B cell (primary cell): ENCODE measurements at regions of chr12 and their contacts with region 1.

Region 1: GRCh38 chr12:24948757-24949722 is at the start of gene BCAT1:
- DNase-seq: peak; percentile 72
- ATAC-seq: peak; percentile 69
- H3K4me3 ChIP-seq: peak within 1 kb of the TSS; percentile 52 to 78 (median 70)
- H3K4me3 Mint-ChIP-seq: peak within 1 kb of the TSS; percentile 97
- H3K27ac ChIP-seq: peak within 1 kb of the TSS in 1 of 2 donors; percentile 45
- H3K27ac Mint-ChIP-seq: peak within 1 kb of the TSS; percentile 78
- H3K4me1 ChIP-seq: peaks cover 21 to 24% of the 10 kb centered on the region in 2 donors
- H3K4me1 Mint-ChIP-seq: peaks cover 47% of the 10 kb centered on the region
- H3K27me3 ChIP-seq: peaks cover 0 to 16% (median 10%) of the 10 kb centered on the region in 4 experiments
- H3K27me3 Mint-ChIP-seq: peaks cover 13% of the 10 kb centered on the region
- CTCF ChIP-seq: no peak
- total RNA-seq, gene BCAT1: 4.9 and 9.6 TPM in 2 replicates

Region 2: DNA sequence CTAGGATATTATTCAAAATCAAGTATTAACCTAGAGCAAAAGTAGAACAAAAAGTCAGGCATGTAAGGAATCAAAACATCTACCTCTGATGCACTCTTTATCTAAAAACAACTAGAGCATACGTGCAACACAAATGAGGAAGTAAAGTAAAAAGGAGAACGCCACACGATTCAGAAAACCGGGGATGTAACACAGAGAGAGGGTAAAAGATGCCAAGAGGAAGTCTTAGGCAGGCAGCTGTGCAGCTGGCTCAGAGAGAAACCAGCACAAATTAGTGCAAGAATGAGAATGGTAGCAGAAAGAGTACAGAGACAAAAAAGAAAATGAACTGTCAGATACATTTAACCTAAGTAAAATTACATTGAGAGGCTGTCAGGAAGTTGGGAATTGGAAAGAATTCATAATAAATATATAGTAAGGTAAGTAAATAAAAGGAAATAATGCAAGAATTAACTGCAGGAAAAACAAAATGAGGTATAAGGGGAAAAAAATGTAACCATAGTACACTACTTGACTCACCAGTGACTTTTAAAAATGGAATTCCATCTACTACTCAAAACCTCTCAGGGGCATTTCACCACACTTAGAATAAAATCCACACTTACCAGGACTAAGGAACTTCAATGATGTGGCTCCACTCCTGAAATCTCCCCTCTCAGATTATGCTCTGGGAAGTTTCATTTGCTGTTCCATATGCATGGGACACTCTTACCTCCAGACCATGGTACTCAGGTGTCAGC is 17.2 kb before region 1 on chr12:
- CTCF ChIA-PET with region 1: no interaction called
- POLR2A ChIA-PET with region 1: no interaction called
- intact Hi-C with region 1: loop called (anchors 2 kb)
- DNase-seq: peak; percentile 72
- ATAC-seq: peak; percentile 94
- H3K4me3 ChIP-seq: no peak overlapping the region
- H3K4me3 Mint-ChIP-seq: peak overlapping the region; percentile 5
- H3K27ac ChIP-seq: peak overlapping the region in 1 of 2 donors; percentile 42
- H3K27ac Mint-ChIP-seq: peak overlapping the region; percentile 52
- H3K4me1 ChIP-seq: peaks cover 9 to 12% of the 10 kb centered on the region in 2 donors
- H3K4me1 Mint-ChIP-seq: peaks cover 18% of the 10 kb centered on the region
- H3K27me3 ChIP-seq: no peaks in the 10 kb centered on the region
- H3K27me3 Mint-ChIP-seq: no peaks in the 10 kb centered on the region
- CTCF ChIP-seq: no peak